ENCODE measurements at regions of chr6 and their contacts with region 1.

Region 1: GRCh38 chr6:11665604-11666326 is 112.8 kb downstream of the ADTRP start:
- DNase-seq: no peak
- ATAC-seq: no peak
- H3K4me3 ChIP-seq: no peak overlapping the region
- H3K4me3 Mint-ChIP-seq: no peak overlapping the region
- H3K27ac ChIP-seq: no peak overlapping the region
- H3K27ac Mint-ChIP-seq: no peak overlapping the region
- H3K4me1 ChIP-seq: no peaks in the 10 kb centered on the region
- H3K4me1 Mint-ChIP-seq: no peaks in the 10 kb centered on the region
- H3K27me3 ChIP-seq: peaks cover 0 to 3% of the 10 kb centered on the region in 2 experiments
- H3K27me3 Mint-ChIP-seq: peaks cover 19 to 21% of the 10 kb centered on the region in 2 donors

Region 2: DNA sequence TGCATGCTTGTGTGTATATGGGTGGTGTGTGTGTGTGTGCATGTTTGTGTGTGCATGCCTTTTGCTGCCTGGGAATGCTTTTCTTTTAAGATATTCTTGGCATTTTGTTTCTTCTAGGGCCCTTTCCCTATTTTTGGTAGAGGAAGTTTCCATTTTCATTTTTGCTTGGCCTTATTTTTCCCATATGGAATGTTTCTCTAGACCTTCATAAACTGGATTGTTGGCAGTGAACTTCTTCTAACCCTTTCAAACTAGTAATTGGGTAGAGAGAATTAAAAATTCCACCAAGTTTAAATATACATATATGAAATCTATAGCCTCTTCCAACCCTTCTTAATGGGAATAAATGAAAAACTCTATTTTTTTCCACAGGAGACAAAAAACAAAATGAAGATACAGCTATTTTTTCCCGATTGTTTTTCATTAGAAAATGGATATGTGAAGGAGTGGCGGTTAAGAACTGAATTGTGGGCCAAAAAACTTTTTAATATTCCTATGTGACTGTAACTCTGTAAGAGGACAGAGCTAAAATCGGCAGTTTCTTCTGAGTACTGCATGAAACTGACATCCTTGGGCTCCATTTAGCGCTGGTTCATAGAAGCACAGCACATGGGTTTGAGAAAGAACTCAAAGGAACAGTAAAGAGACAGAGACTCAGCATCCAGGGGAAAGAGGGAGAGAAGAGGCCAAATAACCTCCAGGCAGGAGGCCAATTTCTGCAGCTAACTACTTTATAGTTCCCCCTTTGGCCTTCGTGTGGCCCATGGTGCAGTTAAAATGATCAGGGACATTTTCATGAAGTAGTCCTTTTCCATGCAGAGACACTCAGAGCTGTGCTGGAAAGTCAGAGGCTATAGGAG is 26.2 kb before region 1 on chr6:
- CTCF ChIA-PET with region 1: no interaction called
- POLR2A ChIA-PET with region 1: no interaction called
- DNase-seq: no peak
- ATAC-seq: no peak
- H3K4me3 ChIP-seq: no peak overlapping the region
- H3K4me3 Mint-ChIP-seq: no peak overlapping the region
- H3K27ac ChIP-seq: no peak overlapping the region
- H3K27ac Mint-ChIP-seq: no peak overlapping the region
- H3K4me1 ChIP-seq: no peaks in the 10 kb centered on the region
- H3K4me1 Mint-ChIP-seq: no peaks in the 10 kb centered on the region
- H3K27me3 ChIP-seq: peaks cover 0 to 6% of the 10 kb centered on the region in 2 experiments
- H3K27me3 Mint-ChIP-seq: peaks cover 3 to 4% of the 10 kb centered on the region in 2 donors

Region 3: DNA sequence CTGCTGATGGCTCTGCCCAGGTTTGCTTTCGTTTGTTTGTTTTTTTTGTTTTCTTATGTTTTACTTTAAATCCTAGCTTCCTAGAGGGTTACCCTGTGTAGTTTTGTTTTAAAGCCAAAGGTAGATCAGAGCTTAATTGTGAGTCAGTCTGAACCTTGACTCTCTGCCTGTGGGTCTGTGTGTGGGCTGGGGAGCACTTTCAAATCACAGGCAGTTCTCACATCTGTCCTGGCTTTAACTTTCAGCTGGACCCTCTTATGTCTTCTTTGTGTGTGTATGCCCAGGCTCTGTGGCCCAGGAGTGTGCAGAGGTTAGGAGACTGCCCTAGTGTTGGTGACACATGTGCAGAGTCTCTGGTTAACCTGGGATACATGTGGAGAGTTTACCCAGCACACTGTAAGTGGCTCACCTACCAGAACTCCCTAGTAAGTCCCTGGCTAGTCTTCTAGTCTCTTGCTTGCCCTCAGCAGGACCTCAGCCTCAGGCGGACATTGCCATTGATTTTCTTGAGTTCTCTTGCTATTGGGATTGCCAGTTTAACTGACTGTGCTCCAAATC is 365.3 kb after region 1 on chr6:
- CTCF ChIA-PET with region 1: no interaction called
- POLR2A ChIA-PET with region 1: interaction called in 1 of 2 experiments, 11 read pairs
- DNase-seq: no peak
- ATAC-seq: no peak
- H3K4me3 ChIP-seq: no peak overlapping the region
- H3K4me3 Mint-ChIP-seq: no peak overlapping the region
- H3K27ac ChIP-seq: no peak overlapping the region
- H3K27ac Mint-ChIP-seq: peak overlapping the region in 1 of 2 donors; percentile 8
- H3K4me1 ChIP-seq: peaks cover 0 to 22% of the 10 kb centered on the region in 2 experiments
- H3K4me1 Mint-ChIP-seq: peaks cover 60 to 74% (median 64%) of the 10 kb centered on the region in 3 donors
- H3K27me3 ChIP-seq: no peaks in the 10 kb centered on the region
- H3K27me3 Mint-ChIP-seq: no peaks in the 10 kb centered on the region

Region 4: DNA sequence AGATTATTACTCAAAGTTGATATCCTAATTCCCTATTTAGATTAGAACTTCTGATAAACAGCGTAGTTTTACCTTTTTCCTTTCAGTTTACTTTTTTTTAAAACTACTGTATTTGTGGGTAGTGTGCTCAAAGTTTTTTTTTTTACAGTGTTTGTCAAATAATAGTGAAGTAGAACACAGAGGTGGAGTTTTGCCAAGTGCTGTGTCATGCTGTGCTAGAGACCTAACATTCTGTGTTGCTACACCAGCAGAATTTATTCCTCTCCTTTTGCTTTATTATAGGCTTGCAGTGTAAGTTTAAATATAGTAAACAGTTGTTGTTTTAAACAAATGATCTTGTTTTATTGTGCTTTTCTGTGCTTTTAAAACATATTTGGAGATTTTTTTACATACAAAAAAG is 471.7 kb after region 1 on chr6:
- CTCF ChIA-PET with region 1: no interaction called
- POLR2A ChIA-PET with region 1: no interaction called
- DNase-seq: no peak
- ATAC-seq: no peak
- H3K4me3 ChIP-seq: no peak overlapping the region
- H3K4me3 Mint-ChIP-seq: no peak overlapping the region
- H3K27ac ChIP-seq: no peak overlapping the region
- H3K27ac Mint-ChIP-seq: peak overlapping the region in 1 of 2 donors; percentile 11
- H3K4me1 ChIP-seq: peaks cover 6 to 10% of the 10 kb centered on the region in 2 experiments
- H3K4me1 Mint-ChIP-seq: peaks cover 22 to 35% (median 28%) of the 10 kb centered on the region in 3 donors
- H3K27me3 ChIP-seq: no peaks in the 10 kb centered on the region
- H3K27me3 Mint-ChIP-seq: no peaks in the 10 kb centered on the region